Naive thymus-derived CD4-positive, alpha-beta T cell (primary cell): ENCODE measurements at regions of chr10 and their contacts with region 1.

Region 1: DNA sequence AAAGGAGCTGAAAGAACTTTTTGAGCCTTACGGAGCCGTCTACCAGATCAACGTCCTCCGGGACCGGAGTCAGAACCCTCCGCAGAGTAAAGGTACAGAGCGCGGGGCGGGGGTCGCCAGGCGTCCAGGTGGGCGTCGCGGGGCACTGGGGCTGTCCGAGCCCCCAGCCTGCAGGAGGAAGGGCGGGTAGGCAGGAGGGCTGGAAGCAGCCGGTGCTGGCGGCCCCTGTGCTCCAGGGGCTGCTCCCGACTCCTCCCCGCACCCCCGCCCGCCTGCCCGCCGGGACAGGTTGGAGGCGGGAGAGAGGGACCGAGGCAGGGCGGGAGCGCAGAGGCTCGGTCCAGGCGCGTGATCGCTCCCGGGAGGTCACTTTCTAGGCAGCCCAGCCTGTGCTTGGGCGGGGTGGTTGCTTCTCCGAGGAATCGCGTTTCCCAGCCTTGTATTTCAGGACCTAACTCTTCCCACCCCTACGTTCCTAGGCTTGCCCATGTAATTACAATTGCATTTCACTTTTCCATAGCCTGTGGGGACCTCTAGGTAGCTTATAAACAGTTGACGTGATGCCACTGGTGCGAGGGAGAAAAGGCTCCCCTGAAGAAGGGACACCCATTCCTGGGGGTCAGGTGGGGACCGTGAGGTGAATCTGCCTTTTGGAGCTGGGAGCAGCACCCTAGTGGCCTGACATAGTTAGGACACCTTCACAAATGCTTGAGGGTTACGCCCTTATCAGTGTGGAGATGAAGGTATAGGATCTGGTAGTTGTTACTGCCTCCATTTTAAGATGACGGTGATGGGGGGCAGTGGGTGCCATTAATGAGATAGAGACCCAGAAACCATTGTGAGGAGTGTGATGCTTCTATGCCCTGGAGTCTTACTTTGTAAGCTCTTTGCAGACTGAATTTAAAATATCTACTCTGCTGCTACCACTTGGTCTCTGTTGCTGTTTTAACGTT is 148.2 kb downstream of the CELF2 start:
- DNase-seq: peak in 8 of 9 donors; percentile 62 to 89 (median 81)
- ATAC-seq: peak; percentile 74
- H3K4me3 ChIP-seq: peak overlapping the region; percentile 92
- H3K4me3 Mint-ChIP-seq: peak overlapping the region in 4 of 10 donors; percentile 97 to 100 (median 99)
- H3K27ac ChIP-seq: peak overlapping the region; percentile 95
- H3K27ac Mint-ChIP-seq: peak overlapping the region in 5 of 9 donors; percentile 97 to 100 (median 98)
- H3K4me1 ChIP-seq: peaks cover 44 to 50% of the 10 kb centered on the region in 2 donors
- H3K4me1 Mint-ChIP-seq: peaks cover 34 to 39% (median 37%) of the 10 kb centered on the region in 7 donors
- H3K27me3 ChIP-seq: no peaks in the 10 kb centered on the region
- H3K27me3 Mint-ChIP-seq: no peaks in the 10 kb centered on the region

Region 2: DNA sequence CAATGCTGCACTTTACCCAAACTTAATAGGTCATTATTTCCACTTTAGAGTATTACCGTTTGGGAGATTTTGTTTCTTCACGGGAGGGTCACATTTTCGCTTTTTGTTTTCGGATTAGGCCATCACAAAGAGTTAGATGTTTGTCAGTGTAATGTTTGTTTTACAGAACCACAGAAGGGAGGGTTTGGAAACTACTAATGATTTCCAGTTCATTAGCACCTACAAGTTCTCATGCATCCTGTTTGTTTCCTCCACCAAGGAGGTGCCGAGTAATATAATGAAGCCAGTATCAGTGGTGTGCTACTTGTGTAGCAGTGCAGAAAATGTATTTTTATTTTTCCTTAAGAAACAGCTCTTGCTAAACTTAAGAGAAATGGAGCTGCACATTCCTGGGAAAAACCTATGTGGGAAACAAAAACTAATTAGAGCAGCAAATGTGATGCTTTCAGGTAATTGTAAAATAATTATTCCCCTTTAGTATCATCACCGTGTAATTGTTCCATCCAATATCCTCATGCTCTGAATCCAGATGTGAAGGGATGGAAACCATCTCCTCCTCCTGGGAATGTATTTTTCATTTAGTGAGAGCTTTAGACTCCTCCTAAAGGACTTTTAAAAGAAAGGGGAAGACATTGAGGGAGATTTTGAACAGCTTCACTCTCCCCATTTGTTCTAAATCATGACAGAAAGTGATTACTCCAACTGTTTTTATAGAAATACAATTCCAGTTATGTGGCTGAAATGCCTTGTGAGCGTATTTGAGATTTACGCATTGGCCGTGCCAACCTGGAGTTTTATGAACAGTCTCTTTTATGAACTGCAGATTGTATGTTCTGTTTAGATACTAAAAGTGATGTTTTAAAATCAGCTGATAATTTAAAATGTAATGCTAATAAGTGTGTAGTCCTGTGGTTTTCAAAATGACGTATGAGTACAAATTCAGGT is 142.6 kb before region 1 on chr10:
- CTCF ChIA-PET with region 1: no interaction called
- POLR2A ChIA-PET with region 1: interaction called, 3 read pairs
- intact Hi-C with region 1: loop called (anchors 2 to 5 kb)
- DNase-seq: no peak
- ATAC-seq: no peak
- H3K4me3 ChIP-seq: no peak overlapping the region
- H3K4me3 Mint-ChIP-seq: no peak overlapping the region
- H3K27ac ChIP-seq: no peak overlapping the region
- H3K27ac Mint-ChIP-seq: no peak overlapping the region
- H3K4me1 ChIP-seq: no peaks in the 10 kb centered on the region
- H3K4me1 Mint-ChIP-seq: peaks cover 0 to 8% (median 6%) of the 10 kb centered on the region in 7 donors
- H3K27me3 ChIP-seq: peaks cover 0 to 7% of the 10 kb centered on the region in 2 donors
- H3K27me3 Mint-ChIP-seq: peaks cover 39 to 71% (median 44%) of the 10 kb centered on the region in 5 donors

Region 3: DNA sequence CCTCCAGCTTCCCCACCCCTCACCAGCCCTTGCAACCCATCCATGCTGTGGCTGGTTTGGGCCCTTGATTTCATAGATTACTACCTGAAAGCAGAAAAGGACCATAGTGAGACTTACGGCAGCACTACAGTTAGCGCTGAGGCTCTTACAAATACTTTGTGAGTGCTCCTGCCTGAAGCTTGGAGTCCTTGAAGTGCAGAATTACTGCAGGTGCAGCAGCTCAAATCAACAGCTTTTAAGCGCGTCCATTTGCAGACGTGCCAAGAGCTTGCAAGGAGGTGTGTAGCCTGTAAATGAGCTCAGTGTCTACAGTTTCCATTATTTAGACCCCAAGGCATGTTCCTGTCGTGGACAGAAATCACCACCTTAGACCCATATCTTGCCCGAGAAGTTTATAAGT is 45.2 kb before region 1 on chr10:
- CTCF ChIA-PET with region 1: interaction called, 5 read pairs
- POLR2A ChIA-PET with region 1: interaction called, 133 read pairs
- intact Hi-C with region 1: no loop called
- DNase-seq: peak in 1 of 9 donors; percentile 20
- ATAC-seq: no peak
- H3K4me3 ChIP-seq: no peak overlapping the region
- H3K4me3 Mint-ChIP-seq: peak overlapping the region in 9 of 10 donors; percentile 23 to 79 (median 64)
- H3K27ac ChIP-seq: peak overlapping the region; percentile 4
- H3K27ac Mint-ChIP-seq: peak overlapping the region in 8 of 9 donors; percentile 4 to 86 (median 76)
- H3K4me1 ChIP-seq: peaks cover 0 to 3% of the 10 kb centered on the region in 2 donors
- H3K4me1 Mint-ChIP-seq: peaks cover 3 to 66% (median 42%) of the 10 kb centered on the region in 7 donors
- H3K27me3 ChIP-seq: no peaks in the 10 kb centered on the region
- H3K27me3 Mint-ChIP-seq: peaks cover 0 to 2% (median 0%) of the 10 kb centered on the region in 5 donors

Region 4: GRCh38 chr10:11178606-11179515 is 13.0 kb after region 1 on chr10:
- CTCF ChIA-PET with region 1: interaction called, 54 read pairs
- POLR2A ChIA-PET with region 1: interaction called, 237 read pairs
- intact Hi-C with region 1: loop called (anchors 1 kb)
- DNase-seq: peak; percentile 49 to 93 (median 80)
- ATAC-seq: peak; percentile 90
- H3K4me3 ChIP-seq: peak overlapping the region; percentile 50
- H3K4me3 Mint-ChIP-seq: peak overlapping the region in 4 of 10 donors; percentile 66 to 83 (median 82)
- H3K27ac ChIP-seq: peak overlapping the region; percentile 95
- H3K27ac Mint-ChIP-seq: peak overlapping the region in 6 of 9 donors; percentile 92 to 98 (median 95)
- H3K4me1 ChIP-seq: peaks cover 90 to 96% of the 10 kb centered on the region in 2 donors
- H3K4me1 Mint-ChIP-seq: peaks cover 0 to 99% (median 30%) of the 10 kb centered on the region in 7 donors
- H3K27me3 ChIP-seq: no peaks in the 10 kb centered on the region
- H3K27me3 Mint-ChIP-seq: peaks cover 0 to 3% (median 0%) of the 10 kb centered on the region in 5 donors

Region 5: GRCh38 chr10:11236234-11236633 is 70.4 kb after region 1 on chr10:
- CTCF ChIA-PET with region 1: interaction called, 5 read pairs
- POLR2A ChIA-PET with region 1: interaction called, 4 read pairs
- intact Hi-C with region 1: loop called in 1 of 2 experiments (anchors 1 kb)
- DNase-seq: peak in 6 of 9 donors; percentile 29 to 56 (median 48)
- ATAC-seq: peak; percentile 83
- H3K4me3 ChIP-seq: no peak overlapping the region
- H3K4me3 Mint-ChIP-seq: peak overlapping the region in 9 of 10 donors; percentile 44 to 68 (median 63)
- H3K27ac ChIP-seq: peak overlapping the region; percentile 44
- H3K27ac Mint-ChIP-seq: peak overlapping the region; percentile 26 to 92 (median 77)
- H3K4me1 ChIP-seq: peaks cover 61 to 82% of the 10 kb centered on the region in 2 donors
- H3K4me1 Mint-ChIP-seq: peaks cover 69 to 94% (median 92%) of the 10 kb centered on the region in 7 donors
- H3K27me3 ChIP-seq: no peaks in the 10 kb centered on the region
- H3K27me3 Mint-ChIP-seq: no peaks in the 10 kb centered on the region

Region 6: DNA sequence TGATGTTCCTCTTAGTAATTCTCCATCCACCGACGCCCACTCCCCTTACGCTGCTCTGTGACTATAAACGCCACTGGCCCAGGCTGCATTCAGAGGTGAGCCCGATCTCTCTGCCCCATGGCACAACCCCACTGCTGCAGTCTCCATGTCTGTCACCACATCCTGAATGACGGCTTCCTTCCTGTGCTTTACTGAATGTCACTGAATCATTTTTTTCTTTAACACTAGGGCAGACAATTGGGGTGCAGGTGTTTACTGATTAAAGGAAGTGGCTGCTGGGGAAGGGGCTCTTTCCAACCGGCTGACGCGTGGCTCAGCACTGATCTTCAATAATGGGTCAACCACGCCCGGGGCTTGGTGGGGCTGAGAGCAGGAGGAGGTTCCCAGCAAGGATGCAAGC is 237.2 kb after region 1 on chr10:
- CTCF ChIA-PET with region 1: no interaction called
- POLR2A ChIA-PET with region 1: no interaction called
- intact Hi-C with region 1: loop called in 1 of 2 experiments (anchors 5 kb)
- DNase-seq: peak; percentile 25 to 90 (median 84)
- ATAC-seq: peak; percentile 95
- H3K4me3 ChIP-seq: peak overlapping the region; percentile 45
- H3K4me3 Mint-ChIP-seq: peak overlapping the region; percentile 74 to 87 (median 80)
- H3K27ac ChIP-seq: peak overlapping the region; percentile 57
- H3K27ac Mint-ChIP-seq: peak overlapping the region; percentile 89 to 98 (median 93)
- H3K4me1 ChIP-seq: peaks cover 45 to 48% of the 10 kb centered on the region in 2 donors
- H3K4me1 Mint-ChIP-seq: peaks cover 46 to 89% (median 81%) of the 10 kb centered on the region in 7 donors
- H3K27me3 ChIP-seq: no peaks in the 10 kb centered on the region
- H3K27me3 Mint-ChIP-seq: no peaks in the 10 kb centered on the region